Sciatic nerve (tissue), 2 donors: ENCODE measurements at regions of chr16 and their contacts with region 1.

Region 1: GRCh38 chr16:2142942-2143877 is 5.2 kb upstream of the RAB26 start:
- DNase-seq: no peak
- ATAC-seq: no peak

Region 2: GRCh38 chr16:2027024-2028010 is 115.9 kb before region 1 on chr16:
- intact Hi-C with region 1: loop called (anchors 5 kb)
- DNase-seq: no peak
- ATAC-seq: no peak

Region 3: DNA sequence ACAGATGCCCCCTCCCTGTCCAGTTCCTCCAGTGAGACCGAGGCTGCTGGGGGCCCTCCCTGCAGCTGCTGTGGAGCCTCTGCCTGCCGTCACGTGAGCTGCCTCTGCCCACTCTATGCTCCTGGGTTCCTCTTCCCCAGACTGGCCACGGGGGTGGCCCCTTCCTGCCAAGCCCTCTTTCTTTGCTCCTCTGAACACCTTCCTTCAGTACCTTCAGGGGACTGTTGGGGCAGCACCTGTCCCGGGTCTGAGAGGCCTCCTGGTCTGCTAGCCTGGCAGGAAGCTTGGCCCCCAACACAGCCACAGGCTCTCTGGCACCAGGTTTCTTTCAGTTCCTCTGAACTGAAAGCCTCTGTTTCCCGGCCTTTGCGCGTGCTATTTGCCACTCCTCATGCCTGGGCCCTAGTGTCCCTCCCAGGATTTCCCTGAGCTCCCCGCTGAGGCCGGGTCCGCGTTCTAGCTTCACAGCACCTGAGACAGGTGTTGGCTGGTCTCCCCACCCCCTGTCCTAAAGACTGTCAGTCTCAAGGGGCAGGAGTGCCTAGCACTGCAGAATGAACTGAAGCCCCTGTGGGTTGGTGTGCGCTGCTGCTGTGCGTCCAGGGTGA is 363.9 kb after region 1 on chr16:
- intact Hi-C with region 1: no loop called
- DNase-seq: no peak
- ATAC-seq: peak; percentile 42